ENCODE measurements at regions of chr22 and their contacts with region 1.

Region 1: DNA sequence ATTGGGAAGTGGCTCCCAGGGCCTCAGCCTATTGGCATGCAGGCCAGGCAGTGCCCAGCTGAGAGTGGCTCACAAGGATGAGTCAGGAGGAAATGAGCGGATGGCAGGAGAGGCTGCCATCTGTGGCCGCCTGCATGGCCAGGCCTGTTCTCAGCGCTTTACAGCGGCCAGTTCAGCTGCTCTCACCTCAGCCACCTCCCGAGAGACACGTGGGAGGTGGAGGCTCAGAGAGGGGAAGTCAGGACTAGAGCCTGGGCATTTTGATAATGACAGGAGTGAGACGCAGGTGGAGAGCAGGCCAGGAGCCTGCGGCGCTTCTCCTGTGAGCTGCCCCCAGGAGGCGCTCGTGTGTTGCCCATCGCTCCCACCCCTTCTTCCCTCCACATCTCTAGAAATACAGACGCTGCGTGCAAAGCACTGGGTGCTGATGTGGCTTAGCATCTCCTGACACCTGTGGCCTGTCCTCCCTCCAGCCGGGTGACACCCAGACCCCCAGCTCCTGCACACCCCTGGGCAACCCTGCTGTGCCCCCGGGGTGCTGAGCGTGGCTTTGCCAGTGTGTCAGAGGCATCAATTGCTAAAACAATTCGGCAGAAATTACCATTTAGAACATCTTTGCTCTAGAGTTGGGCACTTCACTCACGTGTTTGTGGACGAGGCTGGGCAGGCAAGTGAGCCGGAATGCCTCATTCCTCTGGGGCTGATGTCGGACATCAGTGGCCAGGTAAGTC is 21.4 kb upstream of the PANX2 start:
- DNase-seq: peak; percentile 61 to 82 (median 67)
- H3K4me3 ChIP-seq: no peak overlapping the region
- H3K4me3 Mint-ChIP-seq: peak overlapping the region in 1 of 7 donors; percentile 18
- H3K27ac ChIP-seq: no peak overlapping the region
- H3K27ac Mint-ChIP-seq: no peak overlapping the region
- H3K4me1 ChIP-seq: no peaks in the 10 kb centered on the region
- H3K4me1 Mint-ChIP-seq: peaks cover 0 to 8% (median 2%) of the 10 kb centered on the region in 3 donors
- H3K27me3 ChIP-seq: no peaks in the 10 kb centered on the region
- H3K27me3 Mint-ChIP-seq: peaks cover 0 to 1% of the 10 kb centered on the region in 2 donors

Region 2: GRCh38 chr22:50190182-50190940 is 41.2 kb after region 1 on chr22:
- CTCF ChIA-PET with region 1: interaction called, 14 read pairs
- POLR2A ChIA-PET with region 1: interaction called, 5 read pairs
- DNase-seq: peak; percentile 72 to 90 (median 85)
- H3K4me3 ChIP-seq: peak overlapping the region; percentile 83
- H3K4me3 Mint-ChIP-seq: peak overlapping the region; percentile 84 to 96 (median 90)
- H3K27ac ChIP-seq: peak overlapping the region; percentile 93
- H3K27ac Mint-ChIP-seq: peak overlapping the region; percentile 95 to 100 (median 100)
- H3K4me1 ChIP-seq: peaks cover 63% of the 10 kb centered on the region
- H3K4me1 Mint-ChIP-seq: peaks cover 34 to 60% (median 43%) of the 10 kb centered on the region in 3 donors
- H3K27me3 ChIP-seq: no peaks in the 10 kb centered on the region
- H3K27me3 Mint-ChIP-seq: peaks cover 0 to 5% of the 10 kb centered on the region in 2 donors

Region 3: GRCh38 chr22:50209893-50210292 is 60.7 kb after region 1 on chr22:
- CTCF ChIA-PET with region 1: interaction called, 35 read pairs
- POLR2A ChIA-PET with region 1: interaction called, 4 read pairs
- DNase-seq: peak; percentile 55 to 78 (median 64)
- H3K4me3 ChIP-seq: no peak overlapping the region
- H3K4me3 Mint-ChIP-seq: peak overlapping the region in 1 of 7 donors; percentile 18
- H3K27ac ChIP-seq: no peak overlapping the region
- H3K27ac Mint-ChIP-seq: peak overlapping the region; percentile 32 to 89 (median 80)
- H3K4me1 ChIP-seq: no peaks in the 10 kb centered on the region
- H3K4me1 Mint-ChIP-seq: peaks cover 18 to 44% (median 33%) of the 10 kb centered on the region in 3 donors
- H3K27me3 ChIP-seq: no peaks in the 10 kb centered on the region
- H3K27me3 Mint-ChIP-seq: peaks cover 0 to 2% of the 10 kb centered on the region in 2 donors

Region 4: DNA sequence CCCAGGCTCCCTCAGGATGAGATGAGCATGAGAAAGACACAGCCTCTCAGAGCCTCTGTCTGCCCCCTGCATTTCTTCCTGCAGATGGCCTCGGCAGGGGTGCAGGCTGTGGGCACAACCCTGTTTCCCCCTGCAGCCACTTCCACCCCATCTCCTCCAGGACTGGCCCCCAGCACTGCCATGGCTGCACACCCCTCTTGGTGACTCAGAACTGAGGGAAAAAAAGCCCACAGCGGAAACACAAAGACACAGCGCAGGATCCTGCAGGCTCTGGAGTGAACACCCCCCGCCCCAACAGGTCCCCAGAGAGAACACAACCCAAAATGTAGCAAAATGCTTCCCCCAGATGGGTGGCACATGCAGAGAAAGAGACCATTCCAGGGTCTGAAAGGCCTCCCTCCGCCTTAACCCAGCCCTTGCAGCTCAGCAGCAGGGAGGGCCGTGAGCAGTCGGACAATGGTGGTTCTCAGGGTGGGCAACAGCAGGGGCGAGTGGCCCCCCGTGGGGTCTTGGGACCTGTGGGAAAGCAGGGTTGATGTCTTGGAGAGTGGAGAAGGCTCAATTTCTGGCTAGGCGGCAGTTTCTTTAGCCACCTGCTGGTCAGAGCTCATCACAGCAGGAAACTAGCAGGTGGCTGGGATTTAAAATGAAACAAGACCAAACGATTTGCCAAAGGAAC is 87.7 kb after region 1 on chr22:
- CTCF ChIA-PET with region 1: no interaction called
- POLR2A ChIA-PET with region 1: no interaction called
- DNase-seq: no peak
- H3K4me3 ChIP-seq: no peak overlapping the region
- H3K4me3 Mint-ChIP-seq: no peak overlapping the region
- H3K27ac ChIP-seq: no peak overlapping the region
- H3K27ac Mint-ChIP-seq: no peak overlapping the region
- H3K4me1 ChIP-seq: peaks cover 8% of the 10 kb centered on the region
- H3K4me1 Mint-ChIP-seq: peaks cover 22 to 46% (median 23%) of the 10 kb centered on the region in 3 donors
- H3K27me3 ChIP-seq: no peaks in the 10 kb centered on the region
- H3K27me3 Mint-ChIP-seq: no peaks in the 10 kb centered on the region

Region 5: DNA sequence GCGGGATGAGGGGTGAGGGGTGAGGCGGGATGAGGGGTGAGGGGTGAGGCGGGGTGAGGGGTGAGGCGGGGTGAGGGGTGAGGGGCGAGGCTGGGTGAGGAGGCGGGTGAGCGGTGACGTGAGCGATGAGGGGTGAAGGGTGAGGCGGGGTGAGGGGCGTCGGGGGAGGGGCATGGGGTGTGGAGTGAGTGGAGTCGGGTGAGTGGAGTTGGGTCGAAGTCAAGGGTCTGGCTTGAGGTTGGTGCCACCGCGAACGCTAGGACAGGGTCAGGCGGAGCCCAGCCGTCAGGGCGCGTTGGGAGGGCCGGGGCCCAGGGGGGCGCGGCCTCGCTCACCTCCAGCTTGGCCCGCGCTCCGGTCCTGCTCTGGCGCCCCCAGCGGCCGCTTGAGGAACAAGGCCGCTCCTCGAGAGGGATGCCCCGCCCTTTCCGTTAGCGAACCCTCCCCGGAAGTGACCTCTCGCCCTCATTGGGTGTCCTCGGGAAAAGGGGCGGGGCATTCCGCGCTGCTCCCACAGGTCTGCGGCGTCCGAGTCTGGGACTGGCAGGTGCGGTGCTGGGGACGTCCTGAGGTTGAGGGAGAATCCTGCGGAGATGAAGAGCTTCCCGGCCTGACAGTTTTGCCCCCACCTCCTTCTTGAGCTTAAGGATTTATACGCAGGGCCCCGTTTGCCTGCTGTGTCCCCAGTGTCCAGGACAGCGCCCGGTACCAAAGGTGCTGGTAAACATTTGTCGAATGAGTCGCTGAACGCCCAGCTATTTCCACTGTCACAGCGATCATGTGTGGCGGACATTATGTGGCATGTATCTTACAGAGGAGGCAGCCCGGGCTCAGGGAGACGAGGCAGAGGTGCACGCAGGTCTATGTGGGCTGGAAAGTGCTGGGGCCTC is 413.6 kb after region 1 on chr22 and contains the start of gene SYCE3:
- CTCF ChIA-PET with region 1: no interaction called
- POLR2A ChIA-PET with region 1: no interaction called
- DNase-seq: peak; percentile 95 to 98 (median 97)
- H3K4me3 ChIP-seq: peak within 1 kb of the TSS; percentile 85
- H3K4me3 Mint-ChIP-seq: peak within 1 kb of the TSS; percentile 81 to 98 (median 92)
- H3K27ac ChIP-seq: peak within 1 kb of the TSS; percentile 29
- H3K27ac Mint-ChIP-seq: peak within 1 kb of the TSS; percentile 74 to 98 (median 90)
- H3K4me1 ChIP-seq: no peaks in the 10 kb centered on the region
- H3K4me1 Mint-ChIP-seq: peaks cover 18 to 21% (median 19%) of the 10 kb centered on the region in 3 donors
- H3K27me3 ChIP-seq: no peaks in the 10 kb centered on the region
- H3K27me3 Mint-ChIP-seq: peaks cover 0 to 4% of the 10 kb centered on the region in 2 donors
- total RNA-seq, gene SYCE3: not detected

Measured in CD8-positive, alpha-beta memory T cell (primary cell).